ENCODE measurements at regions of chr2 and their contacts with region 1.

Region 1: DNA sequence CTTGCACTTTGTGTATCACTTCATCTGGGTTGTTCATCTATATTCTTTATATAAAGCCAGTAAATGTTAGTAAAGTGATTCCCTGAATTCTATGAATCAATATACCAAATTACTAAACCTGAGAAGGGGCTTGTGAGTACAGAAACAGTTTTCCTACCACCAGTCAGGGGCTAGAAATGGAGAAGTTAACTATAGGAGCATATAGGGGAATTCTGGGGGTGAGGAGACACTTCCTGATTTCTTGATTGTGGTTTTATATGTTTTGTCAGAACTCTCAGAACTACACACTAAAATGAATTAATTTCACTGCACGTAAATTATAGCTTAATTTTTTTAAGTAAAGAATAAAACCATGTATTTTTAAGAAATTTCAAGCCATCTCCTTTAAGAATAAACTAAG is 93.7 kb downstream of the SESTD1 start:
- DNase-seq: no peak
- H3K4me3 ChIP-seq: no peak overlapping the region
- H3K27ac ChIP-seq: no peak overlapping the region
- H3K4me1 ChIP-seq: peaks cover 0 to 4% (median 0%) of the 10 kb centered on the region in 4 donors
- H3K27me3 ChIP-seq: no peaks in the 10 kb centered on the region
- CTCF ChIP-seq: no peak
- EP300 ChIP-seq: no peak
- POLR2A ChIP-seq: no peak

Region 2: GRCh38 chr2:179239195-179239594 is 68.3 kb after region 1 on chr2:
- in situ Hi-C with region 1: loop called in 1 of 4 experiments (anchors 10 kb)
- intact Hi-C with region 1: no loop called
- DNase-seq: no peak
- H3K4me3 ChIP-seq: no peak overlapping the region
- H3K27ac ChIP-seq: peak overlapping the region in 2 of 4 donors; percentile 0 to 43
- H3K4me1 ChIP-seq: peaks cover 7 to 41% (median 20%) of the 10 kb centered on the region in 4 donors
- H3K27me3 ChIP-seq: no peaks in the 10 kb centered on the region
- CTCF ChIP-seq: no peak
- EP300 ChIP-seq: no peak
- POLR2A ChIP-seq: no peak